Psoas muscle (tissue), 8 donors: ENCODE measurements at regions of chr21 and their contacts with region 1.

Region 1: DNA sequence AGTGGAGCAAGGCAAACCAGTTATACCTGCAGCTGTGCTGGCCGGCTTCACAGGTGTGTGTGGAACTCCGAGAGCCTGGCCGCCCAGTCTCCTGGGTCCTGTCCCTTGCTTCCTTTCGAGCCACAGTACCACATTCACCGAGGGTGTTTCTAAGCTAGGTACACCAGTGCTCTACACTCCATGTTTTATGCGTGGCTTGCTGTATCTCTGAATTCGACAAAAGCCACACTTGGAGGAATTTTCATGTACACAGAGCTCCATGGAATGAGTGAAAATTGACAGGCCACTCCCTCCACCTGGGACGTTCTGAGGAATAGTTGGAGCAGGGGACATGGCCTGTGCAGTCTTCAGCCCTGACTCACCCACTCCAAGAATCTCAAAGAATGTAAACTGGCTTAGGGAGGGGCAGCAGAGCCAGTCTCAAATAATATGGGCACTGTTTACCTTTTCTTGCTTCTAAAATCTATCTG is 14.0 kb downstream of the ETS2 start:
- DNase-seq: no peak
- ATAC-seq: peak in 1 of 4 donors; percentile 22
- H3K4me3 ChIP-seq: no peak overlapping the region
- H3K27ac ChIP-seq: peak overlapping the region; percentile 82
- H3K4me1 ChIP-seq: peaks cover 38% of the 10 kb centered on the region
- H3K27me3 ChIP-seq: no peaks in the 10 kb centered on the region
- CTCF ChIP-seq: no peak

Region 2: GRCh38 chr21:38804623-38805327 is 15.0 kb before region 1 on chr21:
- intact Hi-C with region 1: no loop called
- DNase-seq: peak; percentile 81 to 88
- ATAC-seq: peak; percentile 71 to 85 (median 76)
- H3K4me3 ChIP-seq: peak overlapping the region; percentile 76
- H3K27ac ChIP-seq: peak overlapping the region; percentile 96
- H3K4me1 ChIP-seq: peaks cover 4% of the 10 kb centered on the region
- H3K27me3 ChIP-seq: no peaks in the 10 kb centered on the region
- CTCF ChIP-seq: peak; percentile 64

Region 3: DNA sequence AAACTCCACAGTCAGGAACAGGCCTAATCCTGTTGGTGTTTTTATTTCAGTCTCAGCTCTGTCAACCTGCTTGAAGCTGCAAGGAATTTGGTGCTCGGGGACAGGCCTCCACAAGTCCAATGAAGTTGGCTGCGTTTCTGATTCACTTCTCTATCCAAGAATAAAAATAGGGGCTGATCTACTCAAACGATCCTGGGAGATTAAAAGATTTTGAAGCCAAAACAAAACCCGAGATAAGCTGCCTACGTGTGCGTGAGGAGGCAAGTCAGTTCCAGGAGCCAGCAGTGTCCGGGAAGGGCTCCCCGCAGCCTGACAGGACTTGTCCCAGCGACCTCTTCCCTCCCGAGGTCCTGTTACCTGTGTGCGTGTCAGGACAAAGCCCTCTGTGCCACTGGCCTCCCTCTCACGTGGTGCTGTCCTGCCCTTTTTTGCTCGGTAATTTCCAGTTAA is 84.0 kb after region 1 on chr21:
- intact Hi-C with region 1: loop called (anchors 5 kb)
- DNase-seq: peak; percentile 71 to 87
- ATAC-seq: peak; percentile 78 to 81 (median 78)
- H3K4me3 ChIP-seq: no peak overlapping the region
- H3K27ac ChIP-seq: peak overlapping the region; percentile 96
- H3K4me1 ChIP-seq: peaks cover 43% of the 10 kb centered on the region
- H3K27me3 ChIP-seq: no peaks in the 10 kb centered on the region
- CTCF ChIP-seq: no peak